AG04449 (cell line): ENCODE measurements at regions of chrX and their contacts with region 1.

Region 1: DNA sequence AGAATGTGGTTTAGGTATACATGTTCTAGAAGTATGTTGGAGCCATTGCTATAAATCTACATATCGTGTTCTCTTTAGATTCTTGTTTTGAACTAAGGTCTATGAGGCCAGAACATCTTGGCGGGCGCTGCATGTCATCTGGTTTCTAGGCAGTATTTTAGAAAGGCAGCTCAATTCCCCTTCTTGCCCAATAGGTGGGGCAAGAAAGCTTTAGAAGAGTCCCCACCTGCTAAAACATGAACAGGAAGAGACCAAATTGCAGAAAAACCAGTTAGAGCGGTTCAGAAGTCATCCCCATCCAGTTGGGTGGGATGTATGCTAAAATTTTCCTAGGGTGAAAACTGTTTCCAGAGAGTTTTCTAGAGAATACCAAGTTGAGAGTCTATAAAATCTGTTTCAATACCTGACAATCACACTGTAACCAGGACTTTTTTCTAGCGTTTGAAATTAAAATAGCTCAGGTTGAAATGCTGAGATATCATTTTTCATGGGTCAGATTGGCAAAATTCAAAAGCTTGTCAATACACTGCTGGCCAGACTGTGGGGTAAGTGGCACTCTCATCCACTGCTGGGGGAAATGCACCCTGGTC is 17.5 kb upstream of the SH3KBP1 start:
- DNase-seq: no peak
- H3K4me3 ChIP-seq: no peak overlapping the region
- CTCF ChIP-seq: peak; percentile 46

Region 2: GRCh38 chrX:19915754-19916153 is 10.9 kb after region 1 on chrX:
- CTCF ChIA-PET with region 1: interaction called, 12 read pairs
- POLR2A ChIA-PET with region 1: no interaction called
- DNase-seq: no peak
- H3K4me3 ChIP-seq: no peak overlapping the region
- CTCF ChIP-seq: no peak

Region 3: DNA sequence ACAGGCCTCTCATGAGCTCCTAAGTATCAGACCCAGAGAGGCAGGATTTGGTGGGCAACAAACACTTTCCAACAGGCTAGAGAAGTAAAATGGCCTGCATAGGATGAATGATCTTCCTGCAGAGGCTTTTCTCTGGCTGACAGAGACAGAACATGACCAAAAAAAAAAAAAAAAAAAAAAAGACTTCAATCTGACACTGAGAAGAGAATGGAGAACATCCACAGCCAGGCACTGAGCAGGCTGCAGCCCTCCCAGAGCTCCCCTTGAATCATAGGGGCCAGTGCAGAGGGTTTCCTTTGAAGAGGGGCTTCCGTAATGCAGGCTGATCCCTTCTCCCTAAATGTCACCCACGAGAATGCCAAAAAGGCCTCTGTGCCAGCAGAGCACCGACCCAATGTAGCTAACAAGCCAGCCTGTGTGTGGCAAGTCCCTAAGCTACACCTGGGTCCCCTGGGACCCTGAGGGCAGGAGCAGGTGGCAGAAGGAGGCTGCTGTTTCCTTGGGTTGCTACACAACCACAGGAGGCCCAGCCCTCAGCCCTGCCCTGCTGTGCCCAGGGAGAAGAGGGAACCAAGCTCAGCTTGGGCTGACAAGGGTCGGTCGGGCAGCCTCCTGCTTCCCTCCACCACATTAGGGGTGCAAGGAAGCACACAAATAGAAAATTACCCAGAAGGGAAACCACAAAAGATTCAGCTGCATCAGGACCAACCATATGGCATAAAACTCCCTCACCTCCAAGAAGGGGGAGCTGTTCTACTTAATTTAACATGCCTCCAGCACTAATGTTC is 156.3 kb after region 1 on chrX:
- CTCF ChIA-PET with region 1: interaction called, 21 read pairs
- POLR2A ChIA-PET with region 1: no interaction called
- DNase-seq: no peak
- H3K4me3 ChIP-seq: no peak overlapping the region
- CTCF ChIP-seq: no peak

Region 4: DNA sequence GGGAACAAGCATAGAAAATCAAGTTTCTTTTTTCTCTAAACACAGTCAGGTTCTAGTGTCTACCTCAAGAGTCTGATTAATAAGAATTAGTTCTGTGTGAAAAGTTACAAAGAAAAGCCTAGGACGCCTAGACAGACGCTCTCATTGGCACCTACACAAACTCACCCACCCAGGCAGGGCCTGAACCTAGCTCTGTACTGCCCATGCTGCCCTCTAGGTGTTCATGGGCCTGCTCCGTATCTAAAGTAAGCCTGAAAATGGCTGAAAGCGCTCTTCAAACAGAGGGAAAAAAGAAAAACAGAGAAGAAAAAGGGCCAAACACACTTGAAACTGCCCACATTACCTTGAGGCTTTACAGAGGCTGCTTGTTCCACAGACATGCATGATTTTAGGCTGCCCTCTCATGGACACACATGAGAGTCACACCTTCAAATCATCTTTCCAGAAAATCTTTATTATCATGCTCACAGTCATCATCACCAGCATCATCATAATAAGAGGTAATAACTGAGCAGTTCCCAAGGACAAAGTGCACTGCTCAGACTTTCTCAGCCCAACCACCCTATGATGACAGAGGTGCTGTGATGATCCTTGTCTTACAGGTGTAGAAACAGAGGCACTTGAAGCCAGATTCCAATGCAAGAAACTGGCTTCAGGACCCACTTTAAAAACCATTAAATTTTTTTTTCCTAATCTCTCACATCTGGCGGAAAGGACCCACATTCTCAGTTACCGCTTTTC is 162.3 kb after region 1 on chrX:
- CTCF ChIA-PET with region 1: interaction called, 21 read pairs
- POLR2A ChIA-PET with region 1: no interaction called
- DNase-seq: no peak
- H3K4me3 ChIP-seq: no peak overlapping the region; the same call in 1 of the 2 replicates
- CTCF ChIP-seq: peak; percentile 28